ENCODE measurements at regions of chr18 and their contacts with region 1.

Region 1: DNA sequence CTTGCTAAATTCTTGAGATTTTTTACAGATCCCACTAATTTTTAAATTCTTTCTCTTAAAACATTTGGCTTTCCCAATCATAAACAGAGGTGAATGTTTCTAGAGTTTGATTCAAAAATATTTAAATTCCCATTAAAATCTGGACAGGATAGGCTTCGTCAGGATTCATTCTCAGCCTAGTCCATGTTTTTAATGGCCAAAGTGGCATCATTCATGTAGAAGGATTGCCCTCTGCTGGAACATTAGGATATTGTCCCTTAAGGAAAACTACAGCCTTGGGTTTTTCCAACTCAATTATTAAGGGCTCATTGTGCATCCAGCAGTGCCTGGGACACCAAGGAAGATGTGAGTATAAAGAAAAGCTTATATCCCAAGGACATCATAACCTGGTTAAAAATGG is 71.7 kb downstream of the TPGS2 start:
- DNase-seq: peak; percentile 50
- H3K4me3 ChIP-seq: no peak overlapping the region
- H3K27ac ChIP-seq: no peak overlapping the region
- H3K4me1 ChIP-seq: no peaks in the 10 kb centered on the region
- H3K27me3 ChIP-seq: no peaks in the 10 kb centered on the region
- CTCF ChIP-seq: peak; percentile 40 to 54
- POLR2A ChIP-seq: no peak

Region 2: GRCh38 chr18:36025025-36025424 is 732.1 kb before region 1 on chr18:
- CTCF ChIA-PET with region 1: no interaction called
- POLR2A ChIA-PET with region 1: no interaction called
- dilution Hi-C with region 1: no loop called
- intact Hi-C with region 1: loop called (anchors 10 kb)
- DNase-seq: peak; percentile 73
- H3K4me3 ChIP-seq: no peak overlapping the region
- H3K27ac ChIP-seq: no peak overlapping the region
- H3K4me1 ChIP-seq: no peaks in the 10 kb centered on the region
- H3K27me3 ChIP-seq: no peaks in the 10 kb centered on the region
- CTCF ChIP-seq: no peak
- POLR2A ChIP-seq: no peak

Measured in endothelial cell of umbilical vein (primary cell).